ENCODE measurements at regions of chr1 and their contacts with region 1.

Region 1: GRCh38 chr1:54791880-54792522 is 9.1 kb downstream of the TTC22 start:
- DNase-seq: peak; percentile 55
- H3K4me3 ChIP-seq: no peak overlapping the region
- H3K27ac ChIP-seq: no peak overlapping the region
- H3K4me1 ChIP-seq: no peaks in the 10 kb centered on the region
- CTCF ChIP-seq: peak; percentile 91

Region 2: GRCh38 chr1:54310439-54311328 is 481.3 kb before region 1 on chr1:
- CTCF ChIA-PET with region 1: no interaction called
- POLR2A ChIA-PET with region 1: no interaction called
- intact Hi-C with region 1: no loop called
- DNase-seq: peak; percentile 41
- H3K4me3 ChIP-seq: no peak overlapping the region
- H3K27ac ChIP-seq: no peak overlapping the region
- H3K4me1 ChIP-seq: peaks cover 7% of the 10 kb centered on the region
- CTCF ChIP-seq: peak; percentile 75

Region 3: DNA sequence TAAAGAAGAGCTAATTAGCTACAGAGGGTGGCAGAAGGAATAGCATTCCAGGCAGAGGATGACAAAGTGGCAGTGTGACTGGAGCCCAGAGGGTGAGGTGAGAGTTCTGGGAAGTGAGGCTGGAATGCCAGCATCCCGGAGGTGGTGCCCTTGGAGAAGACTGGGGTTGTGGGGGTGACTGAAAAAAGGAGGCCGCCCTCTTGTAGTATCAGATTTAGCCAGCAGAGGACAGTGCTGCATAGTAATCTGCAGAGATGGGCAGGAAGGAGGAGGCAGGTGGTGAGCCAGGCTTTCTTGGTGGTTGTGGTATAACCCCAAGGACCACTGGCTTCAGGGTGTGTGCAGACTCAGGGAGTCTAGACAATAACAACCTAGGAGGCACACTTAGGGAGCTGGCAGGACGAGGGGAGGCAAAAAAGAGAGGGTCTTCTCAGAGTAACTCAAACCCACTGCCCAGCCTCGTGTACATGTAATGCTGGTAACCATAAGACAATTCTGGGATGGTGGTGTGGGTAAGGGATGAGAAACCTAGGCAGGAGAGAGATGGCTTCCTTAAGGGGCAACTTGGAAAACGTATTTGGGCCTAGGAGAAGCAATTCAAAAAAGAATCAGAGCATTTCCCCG is 119.9 kb before region 1 on chr1:
- CTCF ChIA-PET with region 1: no interaction called
- POLR2A ChIA-PET with region 1: no interaction called
- intact Hi-C with region 1: loop called (anchors 1 kb)
- DNase-seq: peak; percentile 53
- H3K4me3 ChIP-seq: no peak overlapping the region
- H3K27ac ChIP-seq: no peak overlapping the region
- H3K4me1 ChIP-seq: no peaks in the 10 kb centered on the region
- CTCF ChIP-seq: peak; percentile 84

Region 4: GRCh38 chr1:54721719-54722118 is 70.3 kb before region 1 on chr1:
- CTCF ChIA-PET with region 1: no interaction called
- POLR2A ChIA-PET with region 1: no interaction called
- intact Hi-C with region 1: no loop called
- DNase-seq: no peak
- H3K4me3 ChIP-seq: no peak overlapping the region
- H3K27ac ChIP-seq: no peak overlapping the region
- H3K4me1 ChIP-seq: peaks cover 7% of the 10 kb centered on the region
- CTCF ChIP-seq: no peak

Region 5: GRCh38 chr1:54833121-54833520 is 41.1 kb after region 1 on chr1:
- CTCF ChIA-PET with region 1: no interaction called
- POLR2A ChIA-PET with region 1: no interaction called
- intact Hi-C with region 1: no loop called
- DNase-seq: no peak
- H3K4me3 ChIP-seq: no peak overlapping the region
- H3K27ac ChIP-seq: no peak overlapping the region
- H3K4me1 ChIP-seq: no peaks in the 10 kb centered on the region
- CTCF ChIP-seq: no peak

Measured in OCI-LY7 (cell line).